ENCODE measurements at regions of chr1 and their contacts with region 1.

Region 1: GRCh38 chr1:28248283-28249012 is 10.9 kb upstream of the SESN2 start:
- DNase-seq: peak; percentile 93
- H3K4me3 Mint-ChIP-seq: peak overlapping the region; percentile 56
- H3K27ac Mint-ChIP-seq: peak overlapping the region; percentile 97
- H3K4me1 Mint-ChIP-seq: peaks cover 52% of the 10 kb centered on the region
- H3K27me3 Mint-ChIP-seq: no peaks in the 10 kb centered on the region

Region 2: DNA sequence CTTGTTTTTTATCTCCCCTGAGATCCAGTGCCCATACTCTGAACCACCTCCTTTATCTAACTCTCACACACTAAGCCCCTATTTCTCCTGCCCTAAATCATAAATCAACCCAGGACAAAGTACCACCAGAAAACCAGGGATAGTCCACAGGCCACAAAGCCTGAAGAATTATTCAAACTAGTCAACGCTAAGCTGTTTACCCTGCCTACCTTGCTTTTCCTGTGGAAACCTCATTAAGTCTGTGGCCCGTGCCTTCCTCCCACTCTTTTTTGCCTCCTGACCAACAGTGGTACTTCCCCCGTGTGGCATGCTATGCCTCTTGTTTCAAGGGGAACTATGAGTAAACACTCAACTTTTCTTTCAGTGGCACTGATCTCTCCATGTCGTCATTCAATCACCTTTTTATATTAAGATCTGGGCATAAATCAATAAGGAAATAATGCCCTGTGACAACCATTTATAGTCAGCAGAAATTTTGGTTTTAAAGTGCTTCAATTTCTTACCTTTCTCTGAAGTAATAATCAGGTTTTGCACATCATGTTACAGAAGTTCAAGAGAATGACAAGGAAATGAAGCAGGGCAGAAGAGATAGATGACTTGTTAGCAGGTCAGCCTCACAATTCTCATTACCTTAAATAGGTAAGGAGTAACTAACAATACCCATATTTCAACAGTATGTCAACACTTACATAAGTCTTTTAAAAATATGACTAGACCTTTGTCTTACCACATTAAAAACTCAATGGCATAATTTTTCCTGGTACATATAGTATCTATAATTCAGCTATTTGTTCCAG is 192.1 kb before region 1 on chr1:
- CTCF ChIA-PET with region 1: no interaction called
- intact Hi-C with region 1: no loop called
- DNase-seq: peak; percentile 85
- H3K4me3 Mint-ChIP-seq: no peak overlapping the region
- H3K27ac Mint-ChIP-seq: peak overlapping the region; percentile 59
- H3K4me1 Mint-ChIP-seq: peaks cover 45% of the 10 kb centered on the region
- H3K27me3 Mint-ChIP-seq: no peaks in the 10 kb centered on the region

Region 3: DNA sequence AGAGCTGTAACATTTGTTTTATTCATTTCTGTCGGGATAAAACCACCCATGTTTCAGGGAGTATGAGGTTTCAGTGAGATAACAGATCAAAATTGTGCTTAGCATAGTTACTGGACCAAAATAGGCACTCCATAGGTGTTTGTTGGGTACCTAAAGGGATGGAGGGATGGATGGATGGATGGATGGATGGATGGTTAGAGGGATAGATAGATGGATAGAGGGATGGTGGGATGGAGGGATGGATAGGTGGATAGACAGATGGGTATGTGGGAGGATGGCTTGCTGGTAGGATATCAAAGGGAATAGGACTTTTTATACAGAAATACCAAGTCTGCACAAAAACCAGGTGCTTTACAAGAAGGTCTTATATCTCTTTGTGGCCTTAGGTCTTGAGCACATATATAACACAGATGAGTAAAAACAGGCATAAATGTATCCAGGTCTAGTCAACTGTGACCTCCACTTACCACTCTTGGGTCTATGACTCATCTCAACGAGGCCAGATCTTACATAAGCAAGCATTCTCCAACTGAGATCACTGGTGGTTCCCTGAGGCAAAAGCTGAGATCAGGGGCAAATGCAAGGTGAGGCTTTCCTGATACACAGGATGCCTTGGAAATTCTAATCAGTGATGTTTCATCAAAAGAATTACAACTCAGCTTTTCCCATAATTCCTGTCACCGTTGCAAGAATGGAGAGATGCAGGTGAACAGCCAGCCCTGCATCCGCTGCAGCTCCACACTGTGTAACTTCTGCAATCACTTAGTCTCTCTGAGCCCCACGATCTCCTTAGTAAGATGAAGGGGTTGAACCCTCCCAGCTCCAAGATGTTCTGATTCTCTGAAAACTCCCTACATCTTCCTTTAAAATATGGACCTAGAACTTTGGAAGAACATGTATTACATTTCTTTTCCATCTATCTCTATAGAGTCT is 104.0 kb before region 1 on chr1:
- CTCF ChIA-PET with region 1: no interaction called
- intact Hi-C with region 1: no loop called
- DNase-seq: peak; percentile 77
- H3K4me3 Mint-ChIP-seq: no peak overlapping the region
- H3K27ac Mint-ChIP-seq: no peak overlapping the region
- H3K4me1 Mint-ChIP-seq: peaks cover 16% of the 10 kb centered on the region
- H3K27me3 Mint-ChIP-seq: peaks cover 7% of the 10 kb centered on the region

Region 4: DNA sequence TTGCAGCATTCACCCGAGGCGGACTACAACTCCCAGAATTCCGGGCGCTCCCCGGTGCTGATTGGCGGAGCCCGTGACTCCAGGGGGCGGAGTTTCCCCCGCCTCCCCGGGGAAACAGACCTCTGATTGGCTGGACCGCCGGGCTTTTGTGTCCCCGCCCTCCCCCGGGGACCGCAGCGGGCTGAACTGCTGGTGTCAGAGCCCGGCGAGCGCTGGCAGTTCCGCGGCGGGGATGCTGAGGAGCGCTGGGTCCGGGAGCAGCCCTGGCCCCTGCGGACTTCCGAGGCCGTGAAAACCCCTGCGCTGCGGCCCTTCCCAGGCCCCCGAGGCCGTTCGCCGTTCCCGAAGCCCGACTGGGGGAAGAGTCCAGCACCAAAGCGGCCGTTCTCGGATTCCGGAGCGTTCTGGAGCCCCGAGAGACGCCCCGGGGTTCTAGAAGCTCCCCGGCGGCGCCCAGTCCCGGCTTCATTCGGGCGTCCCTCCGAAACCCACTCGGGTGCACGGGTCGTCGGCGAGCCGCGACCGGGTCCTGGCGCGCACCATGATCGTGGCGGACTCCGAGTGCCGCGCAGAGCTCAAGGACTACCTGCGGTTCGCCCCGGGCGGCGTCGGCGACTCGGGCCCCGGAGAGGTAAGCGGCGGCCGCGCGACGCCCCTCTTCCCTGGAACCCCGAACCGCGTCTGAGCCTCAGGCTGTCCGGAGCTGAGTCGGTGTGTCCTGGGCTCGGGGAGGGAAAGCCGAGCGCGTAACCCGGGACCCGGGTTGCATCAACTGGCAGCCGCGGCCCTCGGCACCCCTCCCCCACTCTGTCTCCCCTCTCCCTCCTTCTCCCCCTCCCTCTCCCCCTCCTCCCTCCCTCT is 11.1 kb after region 1 on chr1 and contains the start of gene SESN2:
- CTCF ChIA-PET with region 1: interaction called, 50 read pairs
- intact Hi-C with region 1: loop called (anchors 1 kb)
- DNase-seq: peak; percentile 100
- H3K4me3 Mint-ChIP-seq: peak within 1 kb of the TSS; percentile 68
- H3K27ac Mint-ChIP-seq: peak within 1 kb of the TSS; percentile 94
- H3K4me1 Mint-ChIP-seq: peaks cover 45% of the 10 kb centered on the region
- H3K27me3 Mint-ChIP-seq: no peaks in the 10 kb centered on the region
- total RNA-seq, gene SESN2: 46.2 to 46.9 TPM

Region 5: DNA sequence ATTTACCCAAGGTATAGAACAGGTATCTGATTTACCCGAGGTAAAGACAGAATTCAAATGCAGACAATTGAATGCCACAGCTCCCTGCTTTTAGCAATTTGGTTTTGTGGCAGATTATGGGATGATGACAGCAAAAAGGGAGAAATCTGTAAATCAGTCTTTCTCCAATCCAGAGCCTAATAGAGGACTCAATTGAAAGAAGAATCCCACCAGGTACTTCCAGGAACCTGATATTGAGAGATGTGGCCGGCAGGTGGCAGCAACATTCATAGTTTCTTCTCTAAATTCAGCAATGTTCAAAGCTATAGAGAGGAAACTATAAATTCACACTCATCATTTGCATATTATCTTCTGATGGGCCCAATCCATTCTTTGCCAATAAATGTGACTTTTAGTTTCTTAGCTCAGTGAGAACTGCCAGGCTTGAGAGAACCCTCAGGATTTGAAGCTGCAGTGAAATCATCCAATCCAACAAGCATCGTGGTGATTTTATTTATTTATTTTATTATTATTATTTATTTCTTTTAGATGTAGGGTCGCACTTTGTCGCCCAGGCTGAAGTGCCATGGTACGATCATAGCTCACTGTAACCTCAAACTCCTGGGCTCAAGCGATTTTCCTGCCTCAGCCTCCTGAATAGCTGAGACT is 111.3 kb after region 1 on chr1:
- CTCF ChIA-PET with region 1: interaction called, 18 read pairs
- intact Hi-C with region 1: loop called (anchors 1 kb)
- DNase-seq: peak; percentile 90
- H3K4me3 Mint-ChIP-seq: no peak overlapping the region
- H3K27ac Mint-ChIP-seq: no peak overlapping the region
- H3K4me1 Mint-ChIP-seq: peaks cover 2% of the 10 kb centered on the region
- H3K27me3 Mint-ChIP-seq: no peaks in the 10 kb centered on the region

Region 6: DNA sequence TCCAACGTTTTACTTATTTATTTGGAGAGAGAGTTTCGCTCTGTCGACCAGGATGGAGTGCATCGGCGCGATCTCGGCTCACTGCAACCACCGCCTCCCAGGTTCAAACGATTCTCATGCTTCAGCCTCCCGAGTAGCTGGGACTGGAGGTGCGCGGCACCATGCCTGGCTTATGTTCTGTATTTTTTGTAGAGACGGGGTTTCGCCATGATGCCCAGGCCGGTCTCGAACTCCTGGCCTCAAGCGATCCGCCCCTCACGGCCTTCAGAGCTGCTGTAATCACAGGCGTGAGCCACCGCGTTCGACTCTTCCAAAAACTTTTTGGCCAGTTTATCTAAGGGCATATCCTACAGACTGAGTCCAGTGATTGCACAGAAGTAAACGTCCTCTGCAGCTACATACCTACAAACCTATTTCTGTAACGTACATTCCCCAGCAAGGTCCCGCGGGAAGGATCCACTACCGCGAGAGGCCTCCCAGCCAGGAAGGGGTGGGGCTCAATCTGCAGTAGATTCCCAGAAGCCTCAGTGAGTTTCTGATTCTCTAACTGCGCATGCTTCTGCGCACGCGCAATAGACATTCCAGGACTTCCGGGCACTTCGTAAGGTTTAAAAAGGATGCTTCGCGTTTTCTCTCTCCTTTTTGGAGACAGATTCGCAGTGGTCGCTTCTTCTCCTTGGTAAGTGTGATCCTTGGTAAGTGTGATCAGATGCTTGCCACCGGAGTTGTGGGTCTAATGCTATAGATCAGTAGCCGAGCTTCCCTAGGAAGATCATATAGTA is 257.1 kb after region 1 on chr1 and contains the start of gene RCC1:
- CTCF ChIA-PET with region 1: interaction called, 3 read pairs
- intact Hi-C with region 1: loop called (anchors 1 kb)
- DNase-seq: peak; percentile 98
- H3K4me3 Mint-ChIP-seq: peak within 1 kb of the TSS; percentile 99
- H3K27ac Mint-ChIP-seq: peak within 1 kb of the TSS; percentile 98
- H3K4me1 Mint-ChIP-seq: peaks cover 22% of the 10 kb centered on the region
- H3K27me3 Mint-ChIP-seq: peaks cover 3% of the 10 kb centered on the region
- total RNA-seq, gene RCC1: 106 to 110 TPM

Region 7: DNA sequence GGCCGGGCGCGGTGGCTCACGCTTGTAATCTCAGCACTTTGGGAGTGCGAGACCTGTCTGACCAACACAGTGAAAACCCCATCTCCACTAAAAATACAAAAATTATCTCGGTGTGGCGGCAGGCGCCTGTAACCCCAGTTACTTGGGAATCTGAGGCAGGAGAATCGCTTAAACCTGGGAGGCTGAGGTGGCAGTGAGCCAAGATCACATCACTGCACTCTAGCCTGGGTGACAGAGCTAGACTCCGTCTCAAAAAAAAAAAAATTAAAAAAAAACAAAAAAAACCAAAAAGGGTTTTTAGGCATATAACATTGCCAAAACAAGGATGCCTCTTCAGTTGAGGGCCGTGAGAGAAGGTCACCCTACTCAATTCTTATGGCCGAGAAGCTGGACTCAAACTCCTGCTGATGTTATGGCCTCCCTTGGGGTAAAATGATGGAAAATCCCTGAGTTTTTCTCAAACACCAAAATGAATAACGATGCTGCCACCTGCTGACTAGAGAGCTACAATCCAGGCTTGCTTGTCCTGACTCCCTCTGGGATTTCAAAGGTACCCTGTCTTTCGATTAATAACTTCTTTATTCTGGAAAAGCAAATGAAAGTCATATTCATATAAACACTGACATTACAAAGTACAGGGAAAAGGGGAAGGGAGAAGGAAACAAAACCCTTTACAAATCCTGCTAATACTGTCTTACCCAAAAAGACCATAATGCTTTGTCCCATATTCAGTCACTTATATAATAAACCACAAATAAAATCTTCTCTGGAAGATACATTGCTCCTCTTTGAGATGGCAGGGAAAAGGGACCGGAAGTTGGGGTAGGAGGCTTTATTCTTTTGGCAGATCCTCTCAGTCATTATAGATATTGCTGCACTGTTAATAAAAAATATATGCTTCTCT is 354.3 kb after region 1 on chr1:
- CTCF ChIA-PET with region 1: interaction called, 3 read pairs
- intact Hi-C with region 1: loop called (anchors 2 kb)
- DNase-seq: peak; percentile 69
- H3K4me3 Mint-ChIP-seq: no peak overlapping the region
- H3K27ac Mint-ChIP-seq: peak overlapping the region; percentile 24
- H3K4me1 Mint-ChIP-seq: no peaks in the 10 kb centered on the region
- H3K27me3 Mint-ChIP-seq: no peaks in the 10 kb centered on the region

Region 8: DNA sequence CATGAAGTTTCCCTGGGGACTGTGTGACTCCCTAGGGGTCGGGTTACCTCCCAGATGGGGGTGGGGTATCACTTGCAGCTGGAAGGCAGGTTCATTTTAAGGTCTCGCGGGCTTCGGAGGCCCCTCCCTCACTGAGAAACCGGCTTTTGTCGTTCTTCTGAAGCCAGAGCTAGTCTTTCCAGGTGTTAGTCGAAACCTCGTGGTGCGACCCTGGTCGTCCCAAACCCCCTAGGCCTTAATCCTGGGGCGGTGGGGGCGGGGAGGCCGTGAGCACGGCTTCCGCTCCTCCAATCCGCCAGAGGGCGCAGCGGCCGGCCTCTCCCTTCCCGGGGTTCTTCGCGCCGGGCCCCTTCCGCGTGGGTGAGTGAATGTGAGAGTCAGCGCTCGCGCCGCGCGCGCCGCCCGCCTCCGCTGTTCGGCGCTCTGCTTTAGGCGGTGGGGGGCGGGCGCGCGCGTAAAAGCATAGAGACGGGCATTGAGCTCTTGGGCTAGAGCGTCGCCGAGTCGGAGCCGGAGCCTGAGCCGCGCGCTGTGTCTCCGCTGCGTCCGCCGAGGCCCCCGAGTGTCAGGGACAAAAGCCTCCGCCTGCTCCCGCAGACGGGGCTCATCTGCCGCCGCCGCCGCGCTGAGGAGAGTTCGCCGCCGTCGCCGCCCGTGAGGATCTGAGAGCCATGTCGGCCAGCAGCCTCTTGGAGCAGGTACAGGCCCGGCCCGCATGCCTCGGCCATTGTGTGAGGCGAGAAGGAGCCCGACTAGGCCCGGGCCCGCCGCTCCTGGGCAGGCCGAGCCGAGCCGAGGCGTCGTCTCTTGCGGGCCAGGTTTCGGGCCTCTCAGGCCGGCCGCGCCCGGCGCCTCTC is 488.2 kb after region 1 on chr1 and contains the start of gene YTHDF2:
- CTCF ChIA-PET with region 1: no interaction called
- intact Hi-C with region 1: loop called (anchors 5 kb)
- DNase-seq: peak; percentile 99
- H3K4me3 Mint-ChIP-seq: peak within 1 kb of the TSS; percentile 96
- H3K27ac Mint-ChIP-seq: peak within 1 kb of the TSS; percentile 92
- H3K4me1 Mint-ChIP-seq: peaks cover 33% of the 10 kb centered on the region
- H3K27me3 Mint-ChIP-seq: no peaks in the 10 kb centered on the region
- total RNA-seq, gene YTHDF2: 64.9 to 66.1 TPM

Measured in activated naive CD4-positive, alpha-beta T cell treated with anti-CD3 and anti-CD28 coated beads for 36 hours (primary cell).